ENCODE measurements at regions of chr16 and their contacts with region 1.

Region 1: DNA sequence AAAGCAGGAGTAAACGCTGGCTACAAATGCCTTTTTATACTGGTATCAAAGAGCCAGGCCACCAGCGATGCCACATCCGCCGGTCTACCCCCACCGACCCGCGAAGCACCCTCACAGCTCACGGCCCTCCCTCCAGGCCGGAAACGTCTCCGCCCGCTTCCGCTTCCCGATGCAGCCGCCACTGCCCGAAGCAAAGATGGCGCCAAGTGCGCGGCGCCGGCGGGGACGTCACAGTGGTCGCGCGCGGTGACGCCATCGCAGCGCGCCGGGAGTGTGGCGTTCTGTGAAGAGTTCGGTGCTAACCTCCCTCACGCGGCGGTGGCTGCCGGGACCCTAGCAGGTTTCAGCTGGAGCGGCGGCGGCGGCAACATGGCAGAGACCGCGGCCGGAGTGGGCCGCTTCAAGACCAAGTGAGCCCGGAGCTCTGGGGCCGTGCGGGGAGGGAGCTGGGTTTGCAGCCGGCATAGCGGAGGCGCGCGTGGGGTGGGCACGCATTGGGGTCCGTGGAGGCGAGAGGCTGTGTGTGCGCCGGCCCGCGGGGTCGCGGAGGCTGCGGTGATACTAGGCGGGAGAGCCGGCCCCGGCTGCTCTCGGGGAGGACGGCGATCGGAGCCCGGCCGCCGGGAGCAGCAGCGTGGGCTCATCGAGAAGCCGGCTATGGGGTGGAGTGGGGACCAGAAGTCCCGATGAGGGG is at the start of gene TBL3:
- DNase-seq: peak; percentile 98
- ATAC-seq: peak; percentile 92
- H3K4me3 Mint-ChIP-seq: peak within 1 kb of the TSS; percentile 94
- H3K27ac Mint-ChIP-seq: peak within 1 kb of the TSS; percentile 97
- H3K4me1 Mint-ChIP-seq: peaks cover 30% of the 10 kb centered on the region
- H3K27me3 Mint-ChIP-seq: no peaks in the 10 kb centered on the region
- total RNA-seq, gene TBL3: 37.6 to 37.9 TPM

Region 2: DNA sequence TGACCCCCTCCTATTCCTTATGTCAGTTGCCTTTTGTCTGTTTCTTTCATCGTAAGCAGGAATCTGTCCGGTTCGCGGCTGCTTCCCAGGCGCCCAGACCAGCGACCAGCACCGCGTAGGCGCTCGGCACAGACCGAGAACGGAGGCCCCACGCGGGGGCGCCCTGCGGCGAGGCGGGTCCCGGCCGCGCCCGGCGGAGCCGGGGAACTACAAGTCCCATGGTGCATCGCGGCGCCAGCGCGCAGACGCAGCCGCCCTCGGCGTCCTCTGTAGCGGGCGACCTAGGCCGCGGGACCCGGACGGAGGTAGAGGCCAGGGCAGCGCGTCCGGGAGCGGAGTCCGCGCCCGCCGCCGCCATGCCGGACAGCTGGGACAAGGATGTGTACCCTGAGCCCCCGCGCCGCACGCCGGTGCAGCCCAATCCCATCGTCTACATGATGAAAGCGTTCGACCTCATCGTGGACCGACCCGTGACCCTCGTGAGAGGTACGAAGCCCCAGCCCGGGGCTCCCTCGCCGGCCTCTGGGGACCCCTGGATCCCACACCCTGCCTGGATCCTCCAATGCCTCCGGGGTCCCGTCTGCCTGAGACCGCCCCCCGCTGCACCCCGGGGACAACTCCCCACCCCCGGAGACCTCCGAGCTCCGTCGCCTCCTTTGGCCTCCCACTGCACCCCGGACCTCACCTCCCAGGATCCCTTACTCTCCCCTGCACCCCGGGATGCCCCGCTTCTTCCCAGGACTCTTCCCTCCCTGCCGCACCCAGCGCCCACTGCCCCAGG is 12.5 kb before region 1 on chr16 and contains the start of gene NDUFB10:
- CTCF ChIA-PET with region 1: interaction called, 3 read pairs
- POLR2A ChIA-PET with region 1: interaction called, 31 read pairs
- DNase-seq: peak; percentile 92
- ATAC-seq: peak; percentile 76
- H3K4me3 Mint-ChIP-seq: peak within 1 kb of the TSS; percentile 95
- H3K27ac Mint-ChIP-seq: peak within 1 kb of the TSS; percentile 95
- H3K4me1 Mint-ChIP-seq: peaks cover 45% of the 10 kb centered on the region
- H3K27me3 Mint-ChIP-seq: no peaks in the 10 kb centered on the region
- total RNA-seq, gene NDUFB10: 141 to 147 TPM

Region 3: GRCh38 chr16:1983544-1984346 is 11.8 kb after region 1 on chr16 and contains the start of gene GFER:
- CTCF ChIA-PET with region 1: interaction called, 4 read pairs
- POLR2A ChIA-PET with region 1: interaction called, 13 read pairs
- DNase-seq: peak; percentile 80
- ATAC-seq: peak; percentile 88
- H3K4me3 Mint-ChIP-seq: peak within 1 kb of the TSS; percentile 80
- H3K27ac Mint-ChIP-seq: peak within 1 kb of the TSS; percentile 32
- H3K4me1 Mint-ChIP-seq: peaks cover 27% of the 10 kb centered on the region
- H3K27me3 Mint-ChIP-seq: peaks cover 31% of the 10 kb centered on the region
- total RNA-seq, gene GFER: 27.2 to 30.5 TPM

Measured in activated CD8-positive, alpha-beta T cell treated with anti-CD3 and anti-CD28 coated beads, Interleukin-2, amount 10 ng/mL, durations not matched to agents 7 days and 5 days (primary cell).